GM10248 (cell line): ENCODE measurements at regions of chr14 and their contacts with region 1.

Region 1: DNA sequence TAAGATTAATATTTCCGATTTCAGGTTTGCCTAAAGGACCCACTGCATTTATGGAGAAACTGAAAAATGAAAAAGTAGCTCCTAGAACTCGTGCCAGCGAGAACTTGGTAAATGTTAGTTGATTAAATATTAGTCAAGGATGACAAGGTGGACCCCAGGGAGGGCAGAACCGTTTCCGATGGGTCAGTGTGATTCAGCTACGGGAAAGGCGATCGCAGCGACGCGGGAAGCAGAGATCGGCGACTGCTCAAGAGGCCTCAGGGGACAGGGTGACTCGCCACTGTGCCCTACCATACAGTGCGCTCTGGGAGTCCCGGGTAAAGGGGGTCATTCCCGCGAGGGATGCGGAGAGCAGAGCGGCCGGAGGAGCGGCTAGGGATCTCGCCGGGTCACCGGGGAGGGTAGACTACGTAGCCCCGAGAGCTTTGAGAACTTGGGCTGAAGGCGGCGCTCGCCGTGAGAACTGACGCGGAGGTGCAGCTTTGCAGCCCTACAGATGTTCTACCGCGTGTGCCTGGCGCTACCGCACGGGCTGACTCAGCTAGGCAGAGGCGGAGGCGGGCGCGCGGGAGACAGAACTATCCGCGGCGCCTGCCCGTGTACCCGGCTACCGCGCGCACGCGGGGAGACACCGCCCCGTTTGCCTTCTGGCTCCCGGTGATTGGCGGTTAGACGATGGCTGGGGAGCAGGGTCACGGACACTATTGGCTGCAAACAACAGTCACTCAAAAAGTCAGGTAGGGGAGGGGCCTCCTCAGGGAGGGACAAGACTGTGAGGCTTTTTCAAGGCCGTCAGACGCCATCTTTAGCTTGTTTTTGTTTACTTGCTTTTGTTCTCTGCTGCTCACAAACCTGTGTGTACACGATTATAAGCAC is 3.2 kb downstream of the C14orf93 start:
- DNase-seq: peak; percentile 97
- CTCF ChIP-seq: no peak

Region 2: GRCh38 chr14:22973217-22974032 is 33.4 kb before region 1 on chr14:
- CTCF ChIA-PET with region 1: interaction called, 19 read pairs
- POLR2A ChIA-PET with region 1: no interaction called
- DNase-seq: peak; percentile 63
- CTCF ChIP-seq: peak; percentile 80

Region 3: DNA sequence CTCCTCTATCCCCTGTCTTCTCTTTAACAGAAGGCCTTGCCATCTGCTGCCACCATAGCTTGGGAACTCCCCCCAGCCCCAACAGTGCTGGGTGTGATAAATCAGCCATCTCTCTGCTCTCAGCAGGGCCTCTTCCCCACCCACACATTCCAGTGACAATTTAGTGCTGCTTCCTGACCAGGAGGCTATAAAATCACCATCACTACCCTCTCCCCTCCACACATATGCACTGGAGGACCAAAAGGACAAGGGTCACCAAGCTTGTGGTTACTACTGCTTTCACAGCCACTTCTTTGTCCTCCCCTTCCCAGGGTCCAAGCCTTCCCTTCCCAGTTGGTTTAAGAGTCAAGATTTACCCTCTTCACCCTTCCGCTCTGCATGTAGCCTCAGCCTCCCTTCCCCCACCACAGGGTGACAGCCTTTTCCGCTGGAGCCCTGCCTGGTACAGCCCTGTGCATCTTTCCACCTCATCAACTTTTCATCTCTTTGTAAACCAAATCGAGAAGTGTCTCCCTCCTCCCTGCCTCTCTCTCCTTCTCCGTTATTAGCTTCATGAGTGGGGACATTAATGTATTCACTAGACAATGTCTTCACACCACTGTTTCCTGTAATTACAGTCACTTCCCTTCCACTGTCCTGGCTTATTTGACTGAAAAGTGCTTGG is 18.5 kb after region 1 on chr14:
- CTCF ChIA-PET with region 1: interaction called, 11 read pairs
- POLR2A ChIA-PET with region 1: no interaction called
- DNase-seq: no peak
- CTCF ChIP-seq: no peak

Region 4: GRCh38 chr14:23034483-23035302 is 27.9 kb after region 1 on chr14 and contains the start of gene PSMB5:
- CTCF ChIA-PET with region 1: interaction called, 6 read pairs
- POLR2A ChIA-PET with region 1: interaction called, 11 read pairs
- DNase-seq: peak; percentile 90
- CTCF ChIP-seq: no peak

Region 5: GRCh38 chr14:23085458-23085857 is 78.7 kb after region 1 on chr14:
- CTCF ChIA-PET with region 1: no interaction called
- POLR2A ChIA-PET with region 1: no interaction called
- DNase-seq: no peak
- CTCF ChIP-seq: no peak